Prostate gland (tissue), 2 donors: ENCODE measurements at regions of chr21 and their contacts with region 1.

Region 1: DNA sequence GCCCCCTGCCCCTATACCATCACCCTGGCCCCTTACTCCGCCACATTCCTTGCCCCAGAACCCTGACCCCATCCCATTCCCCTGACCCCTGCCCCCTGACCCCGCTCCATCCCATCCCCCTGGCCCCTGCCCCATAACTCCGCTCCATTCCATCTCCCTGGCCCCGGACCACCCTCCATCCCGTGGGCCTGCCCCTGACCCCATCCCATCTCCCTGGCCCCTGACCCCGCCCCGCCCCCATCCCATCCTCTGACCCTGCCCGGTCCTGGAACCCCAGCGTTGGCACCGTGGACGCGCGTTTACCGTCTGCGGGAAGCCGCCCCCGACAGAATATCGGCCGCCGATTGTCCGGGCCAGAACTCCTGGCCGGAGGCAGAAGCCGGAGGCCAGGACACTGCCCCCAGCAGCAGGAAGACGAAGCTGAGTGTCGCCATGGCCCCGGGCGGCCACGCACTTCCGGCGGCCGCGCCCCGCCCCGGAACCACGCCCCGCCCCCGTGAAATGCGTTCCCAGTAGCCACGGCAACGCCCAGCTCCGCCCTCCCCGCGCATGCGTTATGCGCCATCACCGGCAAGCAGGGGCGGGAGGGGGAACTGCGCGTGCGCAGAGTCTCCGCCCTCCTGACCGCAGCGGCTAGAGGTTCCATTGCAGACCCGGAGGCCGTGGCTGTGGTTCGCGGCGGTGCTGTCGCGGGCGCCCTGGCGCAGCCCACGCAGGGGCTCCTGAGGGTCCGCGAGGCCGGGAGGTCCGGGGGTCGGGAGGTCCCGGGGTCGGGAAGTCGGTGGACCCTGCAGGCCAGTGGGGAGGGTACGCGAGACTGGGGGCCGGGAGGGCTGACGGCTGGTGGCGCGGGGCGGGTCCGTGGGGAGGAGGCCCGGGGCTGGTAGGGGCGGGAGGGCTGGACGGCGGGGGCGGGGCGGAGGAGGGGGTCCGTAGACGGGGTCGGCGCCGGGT is at the start of gene POFUT2:
- DNase-seq: peak; percentile 94
- H3K4me3 ChIP-seq: peak within 1 kb of the TSS; percentile 71 to 90
- H3K27ac ChIP-seq: peak within 1 kb of the TSS; percentile 67 to 76
- H3K4me1 ChIP-seq: peaks cover 11% of the 10 kb centered on the region
- H3K27me3 ChIP-seq: no peaks in the 10 kb centered on the region
- CTCF ChIP-seq: peak in 2 of 4 experiments; percentile 41 to 43
- POLR2A ChIP-seq: peak; percentile 86
- total RNA-seq, gene POFUT2: 20.2 to 52.4 TPM

Region 2: DNA sequence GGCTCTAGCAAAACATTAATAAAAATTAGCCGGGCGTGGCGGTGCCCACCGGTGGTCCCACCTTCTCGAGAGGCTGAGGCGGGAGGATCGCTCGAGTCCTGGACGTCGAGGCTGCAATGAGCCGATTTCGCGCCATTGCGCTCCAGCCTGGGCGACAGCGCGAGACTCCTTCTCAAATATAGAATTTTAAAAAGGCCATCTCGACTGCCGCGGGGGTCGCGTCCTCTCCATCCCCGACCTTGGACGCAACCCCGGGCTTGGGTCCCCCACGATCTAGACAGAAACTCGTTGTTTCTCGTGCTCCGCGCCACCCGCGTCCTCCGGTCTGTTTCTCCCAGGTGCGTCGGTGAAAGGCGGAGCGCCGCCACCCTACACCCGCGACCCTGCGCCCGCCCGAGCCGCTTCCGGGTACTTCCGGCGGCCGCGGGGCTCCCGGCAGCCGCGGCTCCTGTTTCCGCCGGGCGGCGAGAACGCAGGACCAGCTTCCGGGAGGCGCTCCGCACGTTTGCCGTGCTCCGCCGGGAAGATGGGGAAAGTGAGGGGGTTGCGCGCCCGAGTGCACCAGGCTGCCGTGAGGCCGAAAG is 348.1 kb before region 1 on chr21 and contains the start of gene SLX9:
- intact Hi-C with region 1: loop called (anchors 10 kb)
- DNase-seq: peak; percentile 66
- H3K4me3 ChIP-seq: peak within 1 kb of the TSS; percentile 93 to 96
- H3K27ac ChIP-seq: peak within 1 kb of the TSS; percentile 76 to 82
- H3K4me1 ChIP-seq: peaks cover 6% of the 10 kb centered on the region
- H3K27me3 ChIP-seq: no peaks in the 10 kb centered on the region
- CTCF ChIP-seq: peak in 2 of 4 experiments; percentile 7 to 18
- POLR2A ChIP-seq: peak; percentile 36
- total RNA-seq, gene SLX9: 21.4 to 24.8 TPM

Region 3: GRCh38 chr21:45558044-45558721 is 270.5 kb after region 1 on chr21:
- intact Hi-C with region 1: no loop called
- DNase-seq: no peak
- H3K4me3 ChIP-seq: no peak overlapping the region
- H3K27ac ChIP-seq: no peak overlapping the region
- H3K4me1 ChIP-seq: no peaks in the 10 kb centered on the region
- H3K27me3 ChIP-seq: no peaks in the 10 kb centered on the region
- CTCF ChIP-seq: no peak
- POLR2A ChIP-seq: no peak